AG04450 (cell line): ENCODE measurements at regions of chr1 and their contacts with region 1.

Region 1: DNA sequence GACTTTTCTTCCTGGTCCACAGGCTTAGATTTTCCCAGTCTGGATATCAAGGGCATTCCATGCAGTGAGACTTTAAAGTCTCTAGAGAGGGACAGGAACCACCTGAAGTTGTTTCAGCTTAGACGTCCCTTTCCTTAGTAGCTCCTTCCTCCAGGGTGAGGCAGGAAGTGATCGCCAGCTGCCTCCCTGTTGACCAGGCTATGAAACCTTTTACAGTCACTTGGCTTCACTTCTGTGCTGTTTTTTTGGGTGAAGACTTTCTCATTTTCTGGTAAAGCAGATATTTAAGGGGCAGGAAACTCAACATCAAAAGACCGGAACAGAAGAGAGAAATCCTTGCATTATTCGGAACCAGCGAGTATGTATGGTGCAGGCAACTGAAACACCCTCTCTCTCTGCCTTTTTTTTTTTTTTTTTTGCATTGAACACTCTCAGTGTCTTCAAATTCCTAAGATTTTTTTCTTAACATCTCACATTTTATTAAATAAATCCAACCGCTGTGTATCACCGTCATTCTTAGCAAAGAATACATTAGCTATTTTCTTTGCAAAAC is 234.6 kb upstream of the IRF2BP2 start:
- DNase-seq: no peak
- H3K4me3 ChIP-seq: no peak overlapping the region
- H3K27ac ChIP-seq: no peak overlapping the region
- H3K27me3 ChIP-seq: no peaks in the 10 kb centered on the region
- CTCF ChIP-seq: no peak

Region 2: GRCh38 chr1:234821840-234822239 is 22.7 kb before region 1 on chr1:
- CTCF ChIA-PET with region 1: no interaction called
- POLR2A ChIA-PET with region 1: no interaction called
- DNase-seq: no peak
- H3K4me3 ChIP-seq: no peak overlapping the region
- H3K27ac ChIP-seq: no peak overlapping the region
- H3K27me3 ChIP-seq: no peaks in the 10 kb centered on the region
- CTCF ChIP-seq: no peak

Region 3: DNA sequence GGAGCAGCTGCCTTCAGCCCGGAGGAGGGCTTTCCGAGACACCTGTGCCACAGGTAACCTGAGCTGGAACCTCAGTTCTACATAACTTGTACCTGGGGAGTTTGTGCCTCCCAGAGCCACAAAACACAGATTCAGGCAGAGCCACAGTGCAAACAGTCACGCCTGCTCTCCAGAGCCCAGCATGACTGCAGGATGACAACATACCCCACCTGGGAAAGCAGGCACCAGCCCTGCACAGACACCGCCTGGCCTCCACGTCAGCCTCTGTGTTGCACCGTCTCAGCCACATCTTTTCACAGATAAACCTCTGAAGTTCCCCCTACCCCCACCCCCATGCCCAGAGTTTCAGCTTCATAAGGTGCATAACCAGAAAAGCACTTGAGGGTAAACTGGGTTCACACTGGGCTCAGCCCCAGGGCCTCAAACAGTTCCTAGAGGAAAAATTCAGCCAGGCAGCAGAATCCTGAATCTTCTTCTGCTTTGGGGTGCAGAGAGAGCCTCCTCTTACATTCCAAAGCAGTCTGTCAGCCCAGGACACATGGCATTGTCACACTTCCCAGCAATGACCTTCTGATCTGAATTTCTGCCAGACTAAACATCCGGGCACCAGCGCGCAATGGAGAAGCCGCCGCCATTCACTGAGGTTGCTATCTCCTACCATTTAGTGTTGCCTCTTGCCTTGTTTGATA is 54.6 kb after region 1 on chr1:
- CTCF ChIA-PET with region 1: no interaction called
- POLR2A ChIA-PET with region 1: interaction called, 12 read pairs
- DNase-seq: no peak
- H3K4me3 ChIP-seq: no peak overlapping the region
- H3K27ac ChIP-seq: no peak overlapping the region
- H3K27me3 ChIP-seq: no peaks in the 10 kb centered on the region
- CTCF ChIP-seq: no peak